ENCODE measurements at regions of chr16 and their contacts with region 1.

Region 1: DNA sequence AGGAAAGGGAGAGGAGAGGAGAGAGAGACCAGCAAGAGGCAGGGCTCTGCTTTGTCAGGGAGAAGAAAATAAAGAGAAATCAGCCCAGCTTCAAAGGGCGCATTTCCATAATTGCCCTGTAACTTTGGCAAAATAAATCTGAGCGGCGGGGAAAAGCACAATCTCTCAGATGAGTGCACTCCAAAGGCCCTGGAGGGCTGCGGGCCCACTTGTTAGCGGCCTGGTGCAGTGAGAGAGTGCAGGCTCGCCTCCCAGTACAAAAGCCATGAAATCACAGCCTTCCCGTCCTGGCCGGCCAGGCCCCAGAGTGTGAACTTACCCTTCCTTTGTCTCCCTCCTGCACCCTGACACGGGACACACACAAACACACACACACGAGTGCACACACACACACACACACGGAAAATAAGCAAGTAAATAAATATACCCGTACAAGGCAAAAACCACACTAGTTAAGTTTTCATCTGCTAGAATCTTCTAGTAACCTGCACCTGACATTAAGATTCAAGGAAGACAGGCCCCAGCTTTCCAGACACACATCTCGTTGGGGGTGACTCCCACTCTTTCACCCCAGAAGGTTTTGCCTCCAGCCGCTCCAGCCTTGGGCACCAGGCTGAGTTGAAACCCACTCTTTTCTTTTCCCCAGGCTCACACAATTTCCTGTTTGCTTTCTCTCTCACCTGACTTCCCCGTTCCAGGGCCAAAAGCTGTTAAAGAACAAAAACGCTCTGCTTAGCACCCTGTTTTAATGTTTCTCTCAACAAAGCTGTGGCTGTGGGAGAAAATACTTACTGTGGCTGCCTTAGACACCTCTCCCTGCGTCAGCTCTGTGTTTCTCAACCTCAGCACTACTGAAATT is 8.5 kb downstream of the IRX3 start:
- DNase-seq: no peak
- H3K4me3 ChIP-seq: no peak overlapping the region
- H3K27ac ChIP-seq: no peak overlapping the region
- H3K4me1 ChIP-seq: peaks cover 14% of the 10 kb centered on the region
- H3K27me3 ChIP-seq: peaks cover 14% of the 10 kb centered on the region
- CTCF ChIP-seq: no peak

Region 2: GRCh38 chr16:54518801-54519695 is 241.0 kb after region 1 on chr16:
- intact Hi-C with region 1: no loop called
- DNase-seq: no peak
- H3K4me3 ChIP-seq: no peak overlapping the region
- H3K27ac ChIP-seq: no peak overlapping the region
- H3K4me1 ChIP-seq: peaks cover 23% of the 10 kb centered on the region
- H3K27me3 ChIP-seq: no peaks in the 10 kb centered on the region
- CTCF ChIP-seq: no peak

Region 3: GRCh38 chr16:55367866-55368603 is 1090.0 kb after region 1 on chr16:
- intact Hi-C with region 1: loop called (anchors 10 kb)
- DNase-seq: no peak
- H3K4me3 ChIP-seq: no peak overlapping the region
- H3K27ac ChIP-seq: no peak overlapping the region
- H3K4me1 ChIP-seq: peaks cover 42% of the 10 kb centered on the region
- H3K27me3 ChIP-seq: peaks cover 11% of the 10 kb centered on the region
- CTCF ChIP-seq: no peak